Activated CD4-positive, alpha-beta memory T cell treated with anti-CD3 and anti-CD28 coated beads for 36 hours (primary cell): ENCODE measurements at regions of chr18 and their contacts with region 1.

Region 1: DNA sequence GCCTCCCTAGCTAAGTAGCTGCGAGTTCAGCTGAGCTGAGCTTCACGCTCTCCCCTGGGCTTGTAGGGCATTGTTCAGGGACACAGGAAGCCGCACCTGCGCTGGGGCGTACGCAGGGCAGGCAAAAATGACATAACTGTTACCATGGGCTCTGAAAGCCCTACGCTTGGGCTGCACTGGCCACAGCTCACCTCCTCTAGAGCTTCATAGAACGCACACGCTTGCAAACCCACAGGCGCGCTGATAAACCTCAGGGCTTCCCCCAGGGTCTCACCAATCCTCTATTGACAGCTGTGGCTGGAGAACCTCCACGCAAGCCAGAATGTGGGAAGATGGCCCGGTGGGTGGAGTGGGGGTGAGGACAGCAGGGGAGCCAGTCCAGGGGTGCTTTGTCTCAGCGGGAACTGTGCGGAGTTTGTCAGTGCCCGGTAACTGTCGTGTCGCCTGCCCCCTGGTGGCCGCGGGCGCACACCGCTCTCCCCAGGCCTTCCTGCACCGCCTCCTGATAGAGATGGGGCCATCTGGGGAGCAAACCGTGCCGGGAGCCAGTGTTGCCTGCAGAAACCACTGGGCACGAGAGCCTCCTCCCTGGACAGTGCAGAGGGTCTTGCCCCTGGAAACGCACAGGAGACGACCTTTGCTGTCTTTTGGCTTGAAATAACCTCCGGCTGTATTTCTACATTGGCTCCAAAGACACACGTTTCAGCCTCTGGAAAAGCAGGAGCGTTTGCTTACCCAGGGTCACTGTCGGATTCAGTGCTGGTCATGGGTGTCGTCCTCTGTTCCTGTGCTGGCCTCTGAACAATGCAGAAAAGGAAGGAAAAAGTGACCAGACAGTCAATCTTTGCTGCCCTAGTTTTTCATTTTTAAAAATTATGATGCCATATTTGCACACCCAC is 17.0 kb upstream of the CIDEA start:
- DNase-seq: peak; percentile 78
- H3K4me3 Mint-ChIP-seq: no peak overlapping the region
- H3K27ac Mint-ChIP-seq: no peak overlapping the region
- H3K4me1 Mint-ChIP-seq: no peaks in the 10 kb centered on the region
- H3K27me3 Mint-ChIP-seq: peaks cover 24% of the 10 kb centered on the region

Region 2: DNA sequence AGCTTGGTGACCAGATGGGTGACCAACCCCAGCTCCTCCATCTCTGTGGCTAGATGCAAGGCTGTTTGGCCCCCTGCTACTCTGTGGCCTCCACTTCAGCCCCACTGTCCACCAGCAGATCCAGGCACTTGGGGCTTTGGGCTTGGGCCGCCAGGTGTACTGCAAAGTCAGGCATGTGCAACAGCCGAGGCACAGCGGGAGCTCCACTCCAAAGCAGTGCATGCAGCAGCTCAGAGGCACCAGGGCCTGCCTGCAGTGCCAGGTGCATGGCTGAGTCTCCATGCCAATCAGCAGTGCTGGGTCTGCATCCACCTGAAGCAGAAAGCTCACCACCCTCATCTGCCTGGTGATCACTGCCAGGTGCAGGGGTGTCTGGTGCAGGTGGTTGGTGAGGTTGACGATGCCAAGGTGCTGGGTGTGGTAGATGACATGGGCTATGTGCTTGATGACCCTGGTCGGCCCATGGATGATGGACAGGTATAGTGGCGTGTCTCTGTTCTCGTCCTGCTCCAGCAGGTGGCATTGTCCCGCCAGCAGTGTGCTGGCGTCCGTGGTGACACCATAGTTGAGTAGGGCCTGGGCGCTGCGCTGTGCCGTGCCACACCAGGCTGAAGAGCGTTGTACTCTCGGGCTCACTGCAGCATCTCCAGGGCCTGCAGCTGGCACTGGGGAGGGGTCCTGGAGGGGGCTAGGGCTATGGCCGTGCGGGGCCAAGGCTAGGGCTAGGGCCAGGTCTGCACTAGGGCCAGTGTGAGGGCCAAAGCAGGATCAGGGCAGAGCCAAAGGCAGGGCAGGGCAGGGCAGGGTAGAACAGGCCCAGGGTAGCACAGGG is 144.6 kb before region 1 on chr18:
- CTCF ChIA-PET with region 1: interaction called, 5 read pairs
- POLR2A ChIA-PET with region 1: no interaction called
- intact Hi-C with region 1: loop called (anchors 1 kb)
- DNase-seq: no peak
- H3K4me3 Mint-ChIP-seq: no peak overlapping the region
- H3K27ac Mint-ChIP-seq: no peak overlapping the region
- H3K4me1 Mint-ChIP-seq: no peaks in the 10 kb centered on the region
- H3K27me3 Mint-ChIP-seq: peaks cover 4% of the 10 kb centered on the region